ENCODE measurements at regions of chr6 and their contacts with region 1.

Region 1: DNA sequence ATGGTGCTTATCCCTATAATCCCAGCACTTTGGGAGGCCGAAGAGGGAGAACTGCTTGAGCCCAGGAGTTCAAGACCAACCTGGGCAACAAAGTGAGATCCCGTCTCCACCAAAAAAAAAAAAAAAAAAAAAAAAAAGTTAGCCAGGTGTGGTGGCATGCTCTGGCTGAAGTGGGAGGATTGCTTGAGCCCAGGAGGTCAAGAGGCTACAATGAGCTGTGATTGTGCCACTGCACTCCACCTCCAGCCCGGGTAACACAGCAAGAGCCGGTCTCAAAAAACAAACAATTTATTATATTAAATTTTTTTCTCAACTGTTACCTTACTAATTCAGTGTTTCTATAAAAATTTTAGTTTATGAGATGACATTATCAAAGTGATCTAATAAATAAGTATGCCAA is 85.4 kb upstream of the MAP7 start:
- DNase-seq: no peak
- ATAC-seq: no peak
- H3K4me3 Mint-ChIP-seq: no peak overlapping the region
- H3K27ac Mint-ChIP-seq: no peak overlapping the region
- H3K4me1 Mint-ChIP-seq: no peaks in the 10 kb centered on the region
- H3K27me3 Mint-ChIP-seq: no peaks in the 10 kb centered on the region
- CTCF ChIP-seq: no peak

Region 2: GRCh38 chr6:136719280-136720044 is 83.8 kb after region 1 on chr6:
- CTCF ChIA-PET with region 1: no interaction called
- POLR2A ChIA-PET with region 1: no interaction called
- intact Hi-C with region 1: no loop called
- DNase-seq: no peak
- ATAC-seq: peak; percentile 41
- H3K4me3 Mint-ChIP-seq: peak overlapping the region; percentile 67
- H3K27ac Mint-ChIP-seq: peak overlapping the region; percentile 86
- H3K4me1 Mint-ChIP-seq: peaks cover 72% of the 10 kb centered on the region
- H3K27me3 Mint-ChIP-seq: no peaks in the 10 kb centered on the region
- CTCF ChIP-seq: no peak

Region 3: DNA sequence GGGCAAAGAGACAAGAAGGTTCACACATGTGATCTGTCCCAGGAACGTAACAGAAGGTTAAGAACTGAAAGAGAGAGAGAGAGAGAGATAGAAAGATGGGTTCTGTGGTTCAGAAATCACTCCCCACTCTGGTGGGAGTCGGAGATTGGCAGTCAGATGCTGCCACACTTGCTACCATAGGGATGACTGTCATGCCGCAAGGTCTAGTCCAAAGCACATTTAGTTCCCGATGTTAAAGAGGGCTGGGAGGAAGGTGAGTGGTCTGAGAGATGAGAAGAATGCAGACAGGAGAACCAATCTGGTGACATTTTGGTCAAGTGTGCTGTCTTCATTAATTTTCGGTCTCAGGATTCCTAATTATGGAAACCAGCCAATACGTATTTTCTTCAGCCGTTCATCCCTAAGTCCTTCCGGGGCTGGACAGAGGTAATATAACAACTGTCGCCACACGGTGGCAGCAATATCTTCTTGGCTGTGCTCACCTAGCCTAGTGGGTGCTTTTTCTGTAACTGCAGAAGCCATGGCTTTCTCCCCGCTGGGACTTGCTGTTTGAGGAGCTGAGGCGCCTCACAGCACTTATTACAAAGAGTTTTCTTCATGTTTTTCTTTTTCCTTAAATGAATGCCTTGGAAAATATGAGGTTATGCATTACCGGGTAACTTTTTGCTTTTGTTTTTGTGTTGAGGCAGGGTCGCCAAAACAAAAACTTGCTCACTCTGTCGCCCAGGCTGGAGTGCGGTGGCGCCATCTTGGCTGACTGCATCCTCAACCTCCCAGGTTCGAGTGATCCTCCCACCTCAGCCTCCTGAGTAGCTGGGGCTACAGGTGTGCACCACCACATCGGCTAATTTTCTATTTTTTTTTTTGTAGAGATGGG is 332.5 kb after region 1 on chr6:
- CTCF ChIA-PET with region 1: no interaction called
- POLR2A ChIA-PET with region 1: interaction called, 19 read pairs
- intact Hi-C with region 1: no loop called
- DNase-seq: peak; percentile 39
- ATAC-seq: peak; percentile 93
- H3K4me3 Mint-ChIP-seq: no peak overlapping the region
- H3K27ac Mint-ChIP-seq: no peak overlapping the region
- H3K4me1 Mint-ChIP-seq: peaks cover 4% of the 10 kb centered on the region
- H3K27me3 Mint-ChIP-seq: peaks cover 12% of the 10 kb centered on the region
- CTCF ChIP-seq: peak; percentile 22